Activated naive CD4-positive, alpha-beta T cell treated with anti-CD3 and anti-CD28 coated beads for 36 hours (primary cell): ENCODE measurements at regions of chr7 and their contacts with region 1.

Region 1: GRCh38 chr7:353746-354325 is 63.9 kb downstream of the FOXL3 start:
- DNase-seq: no peak
- H3K4me3 Mint-ChIP-seq: no peak overlapping the region
- H3K27ac Mint-ChIP-seq: no peak overlapping the region
- H3K4me1 Mint-ChIP-seq: peaks cover 12% of the 10 kb centered on the region
- H3K27me3 Mint-ChIP-seq: no peaks in the 10 kb centered on the region

Region 2: GRCh38 chr7:437329-438251 is 83.8 kb after region 1 on chr7:
- CTCF ChIA-PET with region 1: no interaction called
- intact Hi-C with region 1: no loop called
- DNase-seq: no peak
- H3K4me3 Mint-ChIP-seq: no peak overlapping the region
- H3K27ac Mint-ChIP-seq: no peak overlapping the region
- H3K4me1 Mint-ChIP-seq: peaks cover 7% of the 10 kb centered on the region
- H3K27me3 Mint-ChIP-seq: no peaks in the 10 kb centered on the region

Region 3: DNA sequence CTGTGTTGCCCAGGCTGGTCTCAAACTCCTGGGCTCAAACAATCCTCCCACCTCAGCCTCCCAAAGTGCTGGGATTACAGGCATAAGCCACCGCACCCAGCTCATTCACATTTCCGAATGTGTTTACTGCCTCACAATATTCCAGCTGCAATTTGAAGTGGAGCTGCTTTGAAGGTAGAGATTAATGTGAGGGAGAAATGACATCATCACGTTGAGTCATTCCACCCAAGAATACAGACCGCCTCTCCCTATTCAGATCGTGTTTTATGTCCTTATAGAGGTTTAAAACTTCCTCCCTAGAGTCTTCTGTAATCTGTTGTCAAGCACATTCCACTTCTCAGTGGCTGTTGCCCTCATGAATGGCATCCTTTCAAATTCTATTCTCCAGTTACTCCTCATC is 266.2 kb after region 1 on chr7:
- CTCF ChIA-PET with region 1: no interaction called
- intact Hi-C with region 1: loop called (anchors 5 kb)
- DNase-seq: peak; percentile 59
- H3K4me3 Mint-ChIP-seq: no peak overlapping the region
- H3K27ac Mint-ChIP-seq: peak overlapping the region; percentile 99
- H3K4me1 Mint-ChIP-seq: peaks cover 60% of the 10 kb centered on the region
- H3K27me3 Mint-ChIP-seq: no peaks in the 10 kb centered on the region